ENCODE measurements at regions of chr6 and their contacts with region 1.

Region 1: DNA sequence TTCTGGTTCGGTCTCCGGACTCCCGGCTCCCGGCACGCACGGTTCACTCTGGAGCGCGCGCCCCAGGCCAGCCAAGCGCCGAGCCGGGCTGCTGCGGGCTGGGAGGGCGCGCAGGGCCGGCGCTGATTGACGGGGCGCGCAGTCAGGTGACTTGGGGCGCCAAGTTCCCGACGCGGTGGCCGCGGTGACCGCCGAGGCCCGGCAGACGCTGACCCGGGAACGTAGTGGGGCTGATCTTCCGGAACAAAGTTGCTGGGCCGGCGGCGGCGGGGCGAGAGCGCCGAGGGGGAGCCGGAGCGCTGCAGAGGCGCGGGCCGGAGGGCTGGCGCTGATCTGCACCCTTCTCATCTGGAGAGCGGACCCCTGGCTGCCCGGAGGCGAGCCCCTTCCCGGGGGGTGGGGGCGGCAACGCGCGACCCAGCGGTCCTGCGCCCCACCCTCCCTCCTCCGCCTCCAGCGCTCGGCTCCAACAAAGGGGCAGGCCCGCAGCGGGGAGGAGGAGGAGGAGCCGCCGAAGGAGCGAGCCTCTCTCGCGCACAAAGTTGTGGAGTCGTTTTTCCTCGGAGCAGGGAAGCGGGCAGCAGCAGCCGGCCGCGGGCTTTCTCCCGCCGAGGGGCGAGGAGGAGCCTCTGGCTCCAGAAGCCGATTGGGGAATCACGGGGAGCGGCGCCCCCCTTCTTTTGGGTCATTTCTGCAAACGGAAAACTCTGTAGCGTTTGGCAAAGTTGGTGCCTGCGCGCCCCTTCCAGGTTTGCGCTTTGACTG is at the start of gene UTRN:
- DNase-seq: peak; percentile 83
- H3K4me3 ChIP-seq: peak within 1 kb of the TSS; percentile 83 to 93 (median 88)
- H3K27ac ChIP-seq: peak within 1 kb of the TSS; percentile 89
- H3K4me1 ChIP-seq: peaks cover 14% of the 10 kb centered on the region
- H3K27me3 ChIP-seq: no peaks in the 10 kb centered on the region
- CTCF ChIP-seq: no peak
- POLR2A ChIP-seq: peak; percentile 73
- total RNA-seq, gene UTRN: 224 and 228 TPM in 2 replicates

Region 2: GRCh38 chr6:144149891-144150709 is 134.9 kb before region 1 on chr6 and contains the start of gene STX11:
- CTCF ChIA-PET with region 1: no interaction called
- POLR2A ChIA-PET with region 1: no interaction called
- dilution Hi-C with region 1: no loop called
- intact Hi-C with region 1: loop called (anchors 5 kb)
- DNase-seq: peak; percentile 53
- H3K4me3 ChIP-seq: peak within 1 kb of the TSS; percentile 41 to 69 (median 52)
- H3K27ac ChIP-seq: peak within 1 kb of the TSS; percentile 72
- H3K4me1 ChIP-seq: peaks cover 16% of the 10 kb centered on the region
- H3K27me3 ChIP-seq: no peaks in the 10 kb centered on the region
- CTCF ChIP-seq: peak in 1 of 2 donors; percentile 27
- POLR2A ChIP-seq: peak; percentile 75
- total RNA-seq, gene STX11: 4.7 and 6.0 TPM in 2 replicates

Region 3: DNA sequence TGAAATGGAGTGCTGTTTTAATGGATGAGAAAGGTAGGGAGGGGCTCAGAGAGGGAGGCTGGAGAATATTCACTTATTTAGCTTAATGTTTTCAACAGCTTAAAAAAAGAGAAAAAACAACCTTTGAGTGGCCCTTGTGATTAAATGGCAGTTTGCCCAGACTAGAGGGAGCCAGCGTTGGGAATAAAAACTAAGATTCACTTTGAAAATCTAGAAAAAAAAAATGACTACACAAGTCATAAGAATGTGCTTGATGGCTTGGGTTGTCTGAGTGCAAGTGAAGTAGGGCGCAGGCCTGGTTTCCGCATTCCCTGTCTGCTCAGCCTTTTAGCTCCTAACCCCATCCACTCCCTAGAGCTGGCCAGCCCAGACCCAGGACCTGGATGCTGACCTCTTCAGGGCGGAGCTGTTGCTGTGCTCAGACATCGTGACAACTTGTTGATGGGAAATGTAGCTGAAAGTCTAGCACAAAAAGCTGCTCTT is 29.1 kb after region 1 on chr6:
- CTCF ChIA-PET with region 1: interaction called, 4 read pairs
- POLR2A ChIA-PET with region 1: no interaction called
- dilution Hi-C with region 1: no loop called
- intact Hi-C with region 1: loop called (anchors 1 kb)
- DNase-seq: peak; percentile 90
- H3K4me3 ChIP-seq: no peak overlapping the region
- H3K27ac ChIP-seq: peak overlapping the region; percentile 6
- H3K4me1 ChIP-seq: peaks cover 49% of the 10 kb centered on the region
- H3K27me3 ChIP-seq: no peaks in the 10 kb centered on the region
- CTCF ChIP-seq: no peak
- POLR2A ChIP-seq: no peak

Region 4: GRCh38 chr6:144415014-144415413 is 130.0 kb after region 1 on chr6:
- CTCF ChIA-PET with region 1: no interaction called
- POLR2A ChIA-PET with region 1: no interaction called
- dilution Hi-C with region 1: no loop called
- intact Hi-C with region 1: loop called (anchors 5 kb)
- DNase-seq: peak; percentile 48
- H3K4me3 ChIP-seq: no peak overlapping the region
- H3K27ac ChIP-seq: peak overlapping the region; percentile 73
- H3K4me1 ChIP-seq: peaks cover 25% of the 10 kb centered on the region
- H3K27me3 ChIP-seq: no peaks in the 10 kb centered on the region
- CTCF ChIP-seq: no peak
- POLR2A ChIP-seq: no peak

Region 5: GRCh38 chr6:144482142-144482541 is 197.2 kb after region 1 on chr6:
- CTCF ChIA-PET with region 1: interaction called, 27 read pairs
- POLR2A ChIA-PET with region 1: no interaction called
- dilution Hi-C with region 1: no loop called
- intact Hi-C with region 1: loop called (anchors 1 kb)
- DNase-seq: peak; percentile 84
- H3K4me3 ChIP-seq: no peak overlapping the region
- H3K27ac ChIP-seq: no peak overlapping the region
- H3K4me1 ChIP-seq: no peaks in the 10 kb centered on the region
- H3K27me3 ChIP-seq: no peaks in the 10 kb centered on the region
- CTCF ChIP-seq: peak; percentile 70 to 71
- POLR2A ChIP-seq: no peak

Region 6: GRCh38 chr6:144710237-144710636 is 425.3 kb after region 1 on chr6:
- CTCF ChIA-PET with region 1: no interaction called
- POLR2A ChIA-PET with region 1: no interaction called
- dilution Hi-C with region 1: no loop called
- intact Hi-C with region 1: no loop called
- DNase-seq: peak; percentile 61
- H3K4me3 ChIP-seq: no peak overlapping the region
- H3K27ac ChIP-seq: peak overlapping the region; percentile 13
- H3K4me1 ChIP-seq: peaks cover 16% of the 10 kb centered on the region
- H3K27me3 ChIP-seq: no peaks in the 10 kb centered on the region
- CTCF ChIP-seq: no peak
- POLR2A ChIP-seq: no peak